ENCODE measurements at regions of chr1 and their contacts with region 1.

Region 1: DNA sequence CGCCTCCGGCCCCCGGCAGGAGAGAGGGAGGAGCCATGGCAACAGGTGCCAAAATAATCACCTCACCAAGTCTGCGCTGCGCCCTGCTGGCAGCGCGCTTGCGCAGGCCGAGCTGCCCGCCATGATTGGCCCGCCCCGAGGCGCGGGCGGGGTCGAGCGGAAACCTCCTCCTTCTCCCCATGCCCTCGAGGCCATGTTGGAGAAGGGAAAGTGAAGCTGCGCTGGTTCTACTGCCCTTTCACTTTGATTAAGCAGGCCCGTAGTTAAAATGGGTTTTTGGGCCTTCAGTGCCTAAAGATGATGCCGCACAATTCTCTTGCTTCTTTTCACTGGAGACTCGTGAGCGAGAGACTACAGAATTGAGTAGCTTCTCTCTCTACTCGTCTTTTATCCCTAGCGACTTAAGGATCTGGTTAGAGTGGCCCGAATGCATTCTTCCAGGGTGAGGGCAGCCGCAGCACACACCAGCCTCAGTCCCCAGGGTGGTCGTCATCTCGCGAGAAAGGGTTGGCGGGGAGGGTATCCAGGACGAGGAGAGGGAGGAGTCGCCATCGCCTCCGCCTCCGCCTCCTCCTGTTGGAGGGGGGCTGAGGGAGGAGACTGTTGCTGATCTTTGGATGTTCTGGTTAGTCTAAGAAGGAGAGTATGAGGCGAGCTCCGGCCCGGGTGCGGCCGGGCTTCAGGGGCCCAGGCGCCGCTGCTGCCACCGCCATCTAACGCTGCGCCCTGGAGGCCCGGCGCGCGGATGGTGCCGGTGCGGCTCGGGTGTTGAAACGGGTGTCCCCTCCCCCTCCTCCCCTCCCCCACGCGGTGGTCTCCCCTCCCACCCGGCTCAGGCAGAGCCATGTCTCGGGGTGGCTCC is at the start of gene DCAF6:
- DNase-seq: peak; percentile 96 to 98
- ATAC-seq: peak; percentile 85
- H3K4me3 ChIP-seq: peak within 1 kb of the TSS; percentile 76 to 94 (median 90)
- H3K27ac ChIP-seq: peak within 1 kb of the TSS; percentile 94 to 99 (median 98)
- H3K4me1 ChIP-seq: peaks cover 51 to 52% of the 10 kb centered on the region in 2 donors
- H3K27me3 ChIP-seq: no peaks in the 10 kb centered on the region
- CTCF ChIP-seq: no peak
- POLR2A ChIP-seq: peak; percentile 86 to 87
- total RNA-seq, gene DCAF6: 365 to 466 (median 389) TPM

Region 2: GRCh38 chr1:167220537-167221125 is 715.7 kb before region 1 on chr1 and contains the start of gene POU2F1:
- in situ Hi-C with region 1: no loop called
- intact Hi-C with region 1: loop called (anchors 5 kb)
- DNase-seq: peak; percentile 97 to 98
- ATAC-seq: peak; percentile 70 to 82
- H3K4me3 ChIP-seq: peak within 1 kb of the TSS; percentile 77 to 89 (median 84)
- H3K27ac ChIP-seq: peak within 1 kb of the TSS; percentile 94 to 99 (median 98)
- H3K4me1 ChIP-seq: peaks cover 36 to 42% of the 10 kb centered on the region in 2 donors
- H3K27me3 ChIP-seq: no peaks in the 10 kb centered on the region
- CTCF ChIP-seq: peak; percentile 19 to 85 (median 70)
- POLR2A ChIP-seq: peak; percentile 67 to 84
- total RNA-seq, gene POU2F1: 3.8 to 7.3 (median 4.8) TPM

Region 3: GRCh38 chr1:167715157-167715999 is 220.9 kb before region 1 on chr1:
- in situ Hi-C with region 1: loop called in 1 of 4 experiments (anchors 25 kb)
- intact Hi-C with region 1: loop called (anchors 2 kb)
- DNase-seq: peak; percentile 75 to 83
- ATAC-seq: peak; percentile 73 to 82
- H3K4me3 ChIP-seq: peak overlapping the region; percentile 71 to 82 (median 75)
- H3K27ac ChIP-seq: peak overlapping the region; percentile 88 to 97 (median 93)
- H3K4me1 ChIP-seq: peaks cover 0 to 4% of the 10 kb centered on the region in 2 donors
- H3K27me3 ChIP-seq: no peaks in the 10 kb centered on the region
- CTCF ChIP-seq: peak; percentile 70 to 88 (median 82)
- POLR2A ChIP-seq: no peak

Region 4: DNA sequence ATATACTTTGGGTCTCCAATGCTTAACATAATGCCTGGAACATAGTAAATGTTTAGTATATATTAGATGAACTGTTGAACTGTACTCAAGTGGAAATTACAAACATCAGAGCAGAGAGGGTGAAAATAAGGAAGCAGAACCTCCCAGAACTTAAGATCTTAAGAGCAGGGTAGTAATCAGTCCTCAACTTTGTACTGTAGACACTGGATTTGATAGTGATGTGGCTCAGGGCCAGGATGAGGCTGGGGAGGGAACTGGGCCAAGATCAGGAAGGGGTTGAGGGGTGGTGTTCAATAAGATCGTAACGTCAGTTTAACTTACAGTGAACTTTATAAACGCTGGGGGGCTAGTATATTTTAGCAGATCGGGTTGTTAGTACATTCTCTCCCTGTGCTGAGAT is 199.1 kb before region 1 on chr1:
- in situ Hi-C with region 1: no loop called
- intact Hi-C with region 1: no loop called
- DNase-seq: no peak
- ATAC-seq: no peak
- H3K4me3 ChIP-seq: no peak overlapping the region
- H3K27ac ChIP-seq: no peak overlapping the region
- H3K4me1 ChIP-seq: peaks cover 0 to 12% of the 10 kb centered on the region in 2 donors
- H3K27me3 ChIP-seq: no peaks in the 10 kb centered on the region
- CTCF ChIP-seq: no peak
- POLR2A ChIP-seq: no peak

Region 5: GRCh38 chr1:168009322-168009721 is 73.0 kb after region 1 on chr1:
- in situ Hi-C with region 1: no loop called
- intact Hi-C with region 1: no loop called
- DNase-seq: no peak
- ATAC-seq: no peak
- H3K4me3 ChIP-seq: no peak overlapping the region
- H3K27ac ChIP-seq: no peak overlapping the region
- H3K4me1 ChIP-seq: no peaks in the 10 kb centered on the region
- H3K27me3 ChIP-seq: no peaks in the 10 kb centered on the region
- CTCF ChIP-seq: no peak
- POLR2A ChIP-seq: no peak

Region 6: DNA sequence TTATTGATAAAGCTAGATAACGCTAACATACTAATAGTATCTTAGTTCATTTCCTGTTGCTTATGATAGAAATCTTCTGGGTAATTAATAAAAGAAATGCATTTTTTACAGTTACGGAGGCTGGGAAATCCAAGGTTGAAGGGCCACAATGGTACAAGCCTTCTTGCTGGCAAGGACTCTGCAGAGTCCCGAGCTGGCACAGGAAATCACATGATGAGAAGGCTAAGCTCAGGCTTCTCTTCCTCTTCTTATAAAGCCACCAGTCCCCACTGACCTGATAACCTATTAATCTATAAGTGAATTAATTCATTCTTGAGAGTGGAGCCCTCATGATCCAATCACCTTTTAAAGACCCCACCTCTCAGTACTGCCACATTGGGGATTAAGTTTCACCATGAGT is 117.8 kb after region 1 on chr1:
- in situ Hi-C with region 1: no loop called
- intact Hi-C with region 1: loop called (anchors 5 kb)
- DNase-seq: peak; percentile 27 to 55
- ATAC-seq: peak; percentile 80 to 93
- H3K4me3 ChIP-seq: no peak overlapping the region
- H3K27ac ChIP-seq: peak overlapping the region; percentile 69 to 76 (median 74)
- H3K4me1 ChIP-seq: peaks cover 35 to 49% of the 10 kb centered on the region in 2 donors
- H3K27me3 ChIP-seq: no peaks in the 10 kb centered on the region
- CTCF ChIP-seq: no peak
- POLR2A ChIP-seq: no peak

Region 7: GRCh38 chr1:168498159-168498631 is 561.9 kb after region 1 on chr1:
- in situ Hi-C with region 1: no loop called
- intact Hi-C with region 1: no loop called
- DNase-seq: no peak
- ATAC-seq: no peak
- H3K4me3 ChIP-seq: no peak overlapping the region
- H3K27ac ChIP-seq: no peak overlapping the region
- H3K4me1 ChIP-seq: no peaks in the 10 kb centered on the region
- H3K27me3 ChIP-seq: no peaks in the 10 kb centered on the region
- CTCF ChIP-seq: no peak
- POLR2A ChIP-seq: no peak

Region 8: DNA sequence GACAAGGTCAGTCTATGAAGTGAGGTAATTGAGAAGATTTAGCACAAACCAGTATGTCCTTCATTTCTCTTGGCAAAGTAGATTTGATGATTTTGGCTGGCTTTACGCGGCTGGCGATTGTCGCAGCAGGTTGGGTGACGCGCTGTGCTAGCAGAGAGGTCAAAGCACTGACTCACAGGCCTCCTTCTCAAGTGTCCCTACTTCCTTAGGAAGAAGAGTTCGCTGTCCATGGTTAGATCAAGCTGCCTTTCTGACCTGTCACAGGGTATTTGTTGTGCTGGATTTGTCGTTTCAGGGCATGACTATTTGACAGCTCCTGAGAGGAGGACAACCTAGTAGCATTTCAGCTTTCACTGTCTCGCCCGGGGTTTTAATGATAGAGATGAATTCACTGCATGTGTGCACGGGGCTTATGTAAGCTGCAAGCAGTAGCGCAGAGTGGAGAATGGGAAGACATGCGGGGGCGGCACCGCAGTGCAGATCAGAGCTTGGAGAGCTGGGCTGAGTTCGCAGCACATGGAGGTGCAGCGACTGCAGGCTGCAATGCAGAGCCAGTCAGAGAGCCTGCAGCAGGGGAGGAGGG is 672.9 kb after region 1 on chr1:
- in situ Hi-C with region 1: no loop called
- intact Hi-C with region 1: loop called (anchors 10 kb)
- DNase-seq: peak; percentile 86 to 91
- ATAC-seq: peak; percentile 79 to 80
- H3K4me3 ChIP-seq: peak overlapping the region; percentile 35 to 54 (median 46)
- H3K27ac ChIP-seq: peak overlapping the region; percentile 96 to 100 (median 96)
- H3K4me1 ChIP-seq: peaks cover 72 to 79% of the 10 kb centered on the region in 2 donors
- H3K27me3 ChIP-seq: no peaks in the 10 kb centered on the region
- CTCF ChIP-seq: no peak
- POLR2A ChIP-seq: peak; percentile 51 to 87

Region 9: DNA sequence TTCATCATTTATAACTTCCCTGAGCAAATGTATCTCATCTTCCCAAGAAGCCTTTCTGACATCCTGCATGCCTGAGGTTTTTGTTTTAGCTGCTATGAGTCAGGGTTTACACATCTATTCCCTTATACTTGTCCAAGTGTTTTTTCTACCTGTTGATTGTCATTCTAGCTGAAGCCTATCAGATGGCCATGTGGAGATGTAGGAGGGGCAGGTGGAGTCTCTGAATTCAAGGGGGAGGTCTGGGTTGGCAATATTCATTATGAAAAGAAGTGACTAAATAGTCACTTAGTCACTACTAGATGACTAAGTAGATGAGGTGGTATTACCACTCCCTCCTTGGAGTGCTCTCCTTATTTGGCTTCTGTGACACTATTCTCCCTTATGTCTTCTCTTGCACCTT is 692.5 kb after region 1 on chr1:
- in situ Hi-C with region 1: no loop called
- intact Hi-C with region 1: no loop called
- DNase-seq: peak in 1 of 2 donors; percentile 52
- ATAC-seq: peak; percentile 86 to 88
- H3K4me3 ChIP-seq: no peak overlapping the region
- H3K27ac ChIP-seq: peak overlapping the region; percentile 71 to 100 (median 88)
- H3K4me1 ChIP-seq: peaks cover 16 to 42% of the 10 kb centered on the region in 2 donors
- H3K27me3 ChIP-seq: no peaks in the 10 kb centered on the region
- CTCF ChIP-seq: no peak
- POLR2A ChIP-seq: peak in 1 of 2 donors; percentile 21